ENCODE measurements at regions of chr2 and their contacts with region 1.

Region 1: GRCh38 chr2:216034065-216034464 is 20.7 kb upstream of the MREG start:
- H3K4me3 ChIP-seq: no peak overlapping the region
- H3K27ac ChIP-seq: no peak overlapping the region
- H3K4me1 ChIP-seq: no peaks in the 10 kb centered on the region
- CTCF ChIP-seq: no peak

Region 2: GRCh38 chr2:216013080-216013909 is 20.8 kb before region 1 on chr2 and contains the start of gene MREG:
- CTCF ChIA-PET with region 1: interaction called, 17 read pairs
- POLR2A ChIA-PET with region 1: no interaction called
- H3K4me3 ChIP-seq: peak within 1 kb of the TSS; percentile 84
- H3K27ac ChIP-seq: peak within 1 kb of the TSS; percentile 76; the same call in 1 of the 2 replicates
- H3K4me1 ChIP-seq: no peaks in the 10 kb centered on the region; the same call in 1 of the 2 replicates
- CTCF ChIP-seq: no peak

Region 3: GRCh38 chr2:216023055-216023648 is 10.9 kb before region 1 on chr2:
- CTCF ChIA-PET with region 1: interaction called, 52 read pairs
- POLR2A ChIA-PET with region 1: no interaction called
- H3K4me3 ChIP-seq: no peak overlapping the region
- H3K27ac ChIP-seq: no peak overlapping the region
- H3K4me1 ChIP-seq: no peaks in the 10 kb centered on the region
- CTCF ChIP-seq: no peak

Region 4: DNA sequence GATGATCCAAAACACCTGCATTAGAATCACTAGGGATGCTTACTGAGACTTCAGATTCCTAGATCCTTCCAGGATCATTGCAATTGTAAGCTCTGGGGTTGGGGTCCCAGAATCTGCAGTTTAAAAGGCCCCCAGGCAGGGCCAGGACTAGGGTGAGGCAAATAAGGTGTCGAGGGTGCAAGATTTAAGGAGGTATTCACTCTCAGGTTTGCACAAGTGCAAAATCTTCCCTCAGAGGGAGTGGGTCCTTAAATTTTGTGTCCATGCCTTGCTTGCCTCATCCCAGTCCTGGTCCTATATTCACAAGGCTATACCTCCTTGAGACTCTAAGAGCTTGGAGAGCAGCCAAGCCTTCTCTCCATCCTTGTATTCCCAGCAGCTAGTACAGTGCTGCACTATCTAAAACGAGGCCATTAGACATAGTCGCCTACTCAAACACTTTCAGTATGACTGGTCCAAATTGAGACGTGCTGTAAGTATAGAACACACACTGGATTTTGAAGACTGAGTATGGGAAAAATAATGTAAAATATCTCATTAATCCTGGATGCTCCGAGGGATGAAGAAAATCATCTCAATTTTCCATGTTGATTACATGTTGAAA is 10.9 kb after region 1 on chr2:
- CTCF ChIA-PET with region 1: interaction called, 19 read pairs
- POLR2A ChIA-PET with region 1: no interaction called
- H3K4me3 ChIP-seq: no peak overlapping the region
- H3K27ac ChIP-seq: no peak overlapping the region
- H3K4me1 ChIP-seq: no peaks in the 10 kb centered on the region
- CTCF ChIP-seq: no peak